GM10248 (cell line): ENCODE measurements at regions of chr5 and their contacts with region 1.

Region 1: GRCh38 chr5:114449860-114450421 is 88.1 kb downstream of the KCNN2 start:
- DNase-seq: peak; percentile 74
- CTCF ChIP-seq: peak; percentile 96

Region 2: GRCh38 chr5:113612060-113612496 is 837.9 kb before region 1 on chr5:
- CTCF ChIA-PET with region 1: interaction called, 55 read pairs
- POLR2A ChIA-PET with region 1: no interaction called
- DNase-seq: peak; percentile 48
- CTCF ChIP-seq: peak; percentile 57

Region 3: GRCh38 chr5:113678924-113679575 is 770.9 kb before region 1 on chr5:
- CTCF ChIA-PET with region 1: interaction called, 80 read pairs
- POLR2A ChIA-PET with region 1: no interaction called
- DNase-seq: peak; percentile 32
- CTCF ChIP-seq: peak; percentile 75

Region 4: DNA sequence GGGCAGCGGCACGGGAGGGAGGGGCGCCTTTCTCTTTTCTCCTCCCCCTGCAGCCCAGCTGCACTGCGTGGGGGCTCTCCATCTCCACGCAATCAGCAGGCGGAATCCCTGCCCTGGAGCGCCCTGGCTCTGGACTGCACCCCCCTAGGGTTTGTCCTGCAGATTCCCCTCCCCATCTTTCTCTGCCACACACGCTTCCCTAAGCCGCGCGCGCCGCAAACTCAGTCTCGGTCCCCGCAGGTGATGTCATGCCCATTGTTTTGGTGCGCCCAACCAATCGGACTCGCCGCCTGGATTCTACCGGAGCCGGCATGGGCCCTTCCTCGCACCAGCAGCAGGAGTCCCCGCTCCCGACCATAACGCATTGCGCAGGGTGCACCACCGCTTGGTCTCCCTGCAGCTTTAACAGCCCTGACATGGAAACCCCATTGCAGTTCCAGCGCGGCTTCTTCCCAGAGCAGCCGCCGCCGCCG is 88.2 kb before region 1 on chr5 and contains the start of gene KCNN2:
- CTCF ChIA-PET with region 1: interaction called, 25 read pairs
- POLR2A ChIA-PET with region 1: no interaction called
- DNase-seq: peak; percentile 54
- CTCF ChIP-seq: no peak

Region 5: GRCh38 chr5:114367029-114367428 is 82.9 kb before region 1 on chr5:
- CTCF ChIA-PET with region 1: interaction called, 25 read pairs
- POLR2A ChIA-PET with region 1: no interaction called
- DNase-seq: no peak
- CTCF ChIP-seq: no peak

Region 6: DNA sequence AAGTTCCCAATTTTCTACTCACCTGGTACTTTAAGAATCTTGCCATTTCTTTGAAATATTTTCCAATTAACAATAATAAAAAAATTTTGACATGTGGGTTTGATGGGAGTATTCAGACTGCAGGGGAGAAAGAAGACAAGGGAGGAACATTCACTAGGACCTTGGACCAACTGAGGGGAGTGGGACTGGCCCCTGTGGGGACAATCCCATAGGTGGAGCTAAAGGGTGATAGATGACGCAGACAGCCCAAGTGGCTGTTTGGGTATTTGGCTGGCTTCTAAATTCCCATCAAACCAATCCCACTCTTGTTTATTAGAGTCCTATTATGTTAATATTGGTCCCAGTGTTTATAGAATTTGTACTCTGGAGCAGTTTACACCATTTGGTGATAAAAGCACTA is 22.7 kb before region 1 on chr5:
- CTCF ChIA-PET with region 1: interaction called, 11 read pairs
- POLR2A ChIA-PET with region 1: no interaction called
- DNase-seq: no peak
- CTCF ChIP-seq: no peak

Region 7: DNA sequence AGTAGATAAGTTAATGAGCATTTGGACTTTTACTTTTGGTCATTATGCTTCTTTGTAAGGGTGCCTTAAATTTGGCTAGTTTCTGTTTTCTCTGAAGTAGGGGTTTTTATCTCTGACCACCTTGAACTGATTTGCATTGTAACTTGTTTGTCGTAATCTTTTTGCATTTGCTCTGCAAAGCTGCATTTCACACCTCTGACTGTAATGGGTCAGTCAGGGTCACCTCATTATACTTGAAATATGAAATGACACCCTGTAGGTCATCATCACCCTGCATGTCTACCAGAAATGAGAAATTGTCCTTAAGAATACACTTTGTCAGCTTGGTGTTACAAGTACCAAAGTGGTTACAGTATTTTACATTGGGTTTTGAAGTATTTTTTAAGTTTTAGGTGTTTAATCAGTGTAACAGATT is 14.0 kb before region 1 on chr5:
- CTCF ChIA-PET with region 1: interaction called, 30 read pairs
- POLR2A ChIA-PET with region 1: no interaction called
- DNase-seq: no peak
- CTCF ChIP-seq: no peak

Region 8: DNA sequence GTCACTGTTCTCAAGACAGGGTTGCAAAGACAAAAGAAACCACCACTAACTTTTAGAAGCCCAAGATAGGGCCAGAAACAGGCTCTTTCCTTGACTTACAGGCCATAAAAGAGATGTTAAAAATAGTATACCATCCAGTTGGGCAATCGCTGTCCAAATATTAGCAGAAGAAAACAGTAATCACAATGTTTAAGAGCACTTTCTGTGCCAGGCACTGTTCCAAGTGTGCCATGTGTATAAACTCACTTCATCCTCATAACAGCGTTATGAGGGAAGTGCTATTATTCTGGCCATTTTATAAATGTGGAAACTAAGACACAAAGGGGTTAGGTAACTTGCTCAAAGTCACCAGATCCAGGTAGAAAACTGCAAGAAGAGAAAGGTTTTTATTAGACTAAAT is 23.6 kb after region 1 on chr5:
- CTCF ChIA-PET with region 1: no interaction called
- POLR2A ChIA-PET with region 1: no interaction called
- DNase-seq: no peak
- CTCF ChIP-seq: no peak